Colonic mucosa (tissue), 4 donors: ENCODE measurements at regions of chr11 and their contacts with region 1.

Region 1: GRCh38 chr11:3412837-3413236 is 33.9 kb upstream of the ZNF195 start:
- DNase-seq: no peak
- H3K4me3 ChIP-seq: no peak overlapping the region
- H3K27ac ChIP-seq: no peak overlapping the region
- H3K4me1 ChIP-seq: no peaks in the 10 kb centered on the region
- H3K27me3 ChIP-seq: no peaks in the 10 kb centered on the region
- CTCF ChIP-seq: no peak

Region 2: GRCh38 chr11:2778630-2779498 is 634.0 kb before region 1 on chr11:
- intact Hi-C with region 1: no loop called
- DNase-seq: peak; percentile 85
- H3K4me3 ChIP-seq: no peak overlapping the region
- H3K27ac ChIP-seq: peak overlapping the region; percentile 75
- H3K4me1 ChIP-seq: peaks cover 10% of the 10 kb centered on the region
- H3K27me3 ChIP-seq: no peaks in the 10 kb centered on the region
- CTCF ChIP-seq: peak; percentile 22

Region 3: DNA sequence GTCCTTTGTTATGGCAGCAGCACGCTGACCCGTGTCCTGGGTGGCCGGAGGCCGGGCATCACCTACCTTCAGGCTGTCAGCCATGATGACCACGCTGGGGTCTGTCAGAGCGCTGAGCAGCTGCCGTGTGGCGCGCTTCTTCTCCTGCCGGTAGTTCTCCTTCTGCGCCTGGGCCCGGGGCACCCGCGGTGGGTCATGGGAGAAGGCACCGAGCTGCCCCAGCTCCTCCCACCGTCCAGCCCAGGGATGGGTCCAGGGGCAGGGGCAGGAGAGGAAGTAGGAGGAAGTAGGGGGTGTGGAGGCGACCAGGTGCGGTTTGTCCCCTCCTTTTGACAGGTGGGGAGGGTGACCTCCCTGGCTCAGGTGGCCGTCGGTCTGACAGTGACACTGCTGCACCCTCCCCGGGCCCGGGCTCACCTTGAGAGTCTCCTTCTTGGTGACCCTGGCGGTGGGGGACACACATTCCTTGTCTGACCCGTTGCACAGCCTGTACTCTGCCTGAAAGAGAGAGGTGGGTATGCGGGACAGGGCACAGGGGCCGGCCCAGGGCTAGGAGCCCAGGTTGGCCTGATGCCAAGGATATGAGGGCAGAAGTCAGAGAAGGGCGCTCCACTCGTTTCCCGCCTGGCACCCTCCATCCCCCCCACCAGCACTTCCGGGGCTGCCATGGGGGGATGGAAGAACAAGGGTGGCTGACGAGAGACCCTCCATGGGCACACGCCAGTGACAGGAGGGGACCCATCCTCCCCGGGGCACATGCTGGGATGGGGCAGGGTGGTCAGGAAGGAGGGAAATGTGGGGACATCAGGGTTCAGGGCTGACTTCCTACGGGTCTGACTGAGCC is 290.7 kb before region 1 on chr11:
- intact Hi-C with region 1: no loop called
- DNase-seq: no peak
- H3K4me3 ChIP-seq: no peak overlapping the region
- H3K27ac ChIP-seq: no peak overlapping the region
- H3K4me1 ChIP-seq: peaks cover 19% of the 10 kb centered on the region
- H3K27me3 ChIP-seq: no peaks in the 10 kb centered on the region
- CTCF ChIP-seq: no peak

Region 4: DNA sequence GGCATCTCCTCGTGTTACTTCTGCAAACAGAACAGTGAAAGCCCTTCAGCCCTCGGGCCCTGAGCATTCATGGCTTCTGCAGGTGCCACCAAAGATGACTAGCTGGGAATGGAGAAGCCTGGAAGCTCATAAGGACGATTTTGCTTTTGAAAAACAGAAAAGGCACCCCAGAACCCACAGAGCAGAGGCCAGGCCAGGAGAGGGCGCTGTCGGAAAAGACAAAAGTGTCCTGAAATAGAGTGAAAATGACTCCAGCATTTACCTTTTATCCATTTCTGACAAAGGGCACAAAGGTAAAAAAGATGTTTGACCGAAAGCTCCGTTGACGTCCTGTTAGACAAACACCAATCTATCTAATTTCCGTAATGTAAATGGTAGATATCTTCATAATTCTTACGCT is 71.5 kb before region 1 on chr11:
- intact Hi-C with region 1: loop called (anchors 10 kb)
- DNase-seq: peak; percentile 76
- H3K4me3 ChIP-seq: no peak overlapping the region
- H3K27ac ChIP-seq: no peak overlapping the region
- H3K4me1 ChIP-seq: no peaks in the 10 kb centered on the region
- H3K27me3 ChIP-seq: no peaks in the 10 kb centered on the region
- CTCF ChIP-seq: peak; percentile 68